A549 (cell line): ENCODE measurements at regions of chr5 and their contacts with region 1.

Region 1: DNA sequence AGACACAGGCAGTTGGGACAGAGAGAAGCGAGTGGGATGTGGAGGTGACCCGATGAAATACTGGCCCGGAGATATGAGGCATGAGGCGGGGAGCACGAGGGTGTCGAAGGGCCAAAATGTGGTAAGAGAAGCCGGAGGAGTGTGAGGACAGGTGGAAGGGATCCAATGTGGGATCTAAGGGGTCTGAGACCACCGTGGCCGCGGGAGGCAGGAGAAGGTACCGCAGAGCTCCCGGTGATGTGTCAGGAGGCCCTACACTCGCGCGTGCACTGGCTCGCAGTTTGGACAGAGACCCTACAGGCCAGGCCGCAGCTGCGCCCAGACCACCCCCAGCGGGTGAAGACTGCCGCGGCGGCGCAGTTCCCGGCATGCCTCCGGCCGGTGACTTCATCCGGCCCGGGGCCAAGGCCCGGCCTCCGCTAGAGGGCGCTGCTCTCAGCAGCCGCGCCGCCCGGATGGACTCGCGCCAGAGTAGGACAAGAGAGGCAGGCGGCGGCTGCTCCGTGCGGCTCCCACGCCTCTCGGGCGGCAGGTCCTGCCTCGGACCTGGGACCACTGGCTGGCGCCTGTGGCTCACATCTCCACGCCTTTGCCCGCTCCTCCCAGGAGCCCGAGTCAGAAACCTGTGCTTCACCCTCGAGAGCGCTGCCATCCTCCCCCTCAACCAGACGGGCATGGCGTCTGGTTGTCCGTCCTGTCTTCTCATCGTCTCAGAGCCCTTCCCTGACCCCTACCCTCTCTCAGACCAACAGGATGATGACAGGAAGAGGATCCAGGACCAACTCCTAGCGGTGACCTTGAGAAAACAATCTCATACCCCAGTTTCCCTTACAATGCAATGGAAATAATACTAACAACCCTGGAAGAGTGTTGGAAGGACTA is 35.4 kb upstream of the STING1 start:
- DNase-seq: peak; percentile 89 to 94
- ATAC-seq: peak; percentile 86 to 91
- H3K4me3 ChIP-seq: peak overlapping the region; percentile 50
- H3K27ac ChIP-seq: peak overlapping the region; percentile 91 to 92
- H3K4me1 ChIP-seq: 0 out of 3 replicates have a peak, but pooled peaks cover 3% of the 10 kb centered on the region
- CTCF ChIP-seq: peak; percentile 98
- EP300 ChIP-seq: no peak; a peak in 1 of 5 replicates
- POLR2A ChIP-seq: peak; percentile 84
- RAD21 ChIP-seq: peak; percentile 48 to 63

Region 2: DNA sequence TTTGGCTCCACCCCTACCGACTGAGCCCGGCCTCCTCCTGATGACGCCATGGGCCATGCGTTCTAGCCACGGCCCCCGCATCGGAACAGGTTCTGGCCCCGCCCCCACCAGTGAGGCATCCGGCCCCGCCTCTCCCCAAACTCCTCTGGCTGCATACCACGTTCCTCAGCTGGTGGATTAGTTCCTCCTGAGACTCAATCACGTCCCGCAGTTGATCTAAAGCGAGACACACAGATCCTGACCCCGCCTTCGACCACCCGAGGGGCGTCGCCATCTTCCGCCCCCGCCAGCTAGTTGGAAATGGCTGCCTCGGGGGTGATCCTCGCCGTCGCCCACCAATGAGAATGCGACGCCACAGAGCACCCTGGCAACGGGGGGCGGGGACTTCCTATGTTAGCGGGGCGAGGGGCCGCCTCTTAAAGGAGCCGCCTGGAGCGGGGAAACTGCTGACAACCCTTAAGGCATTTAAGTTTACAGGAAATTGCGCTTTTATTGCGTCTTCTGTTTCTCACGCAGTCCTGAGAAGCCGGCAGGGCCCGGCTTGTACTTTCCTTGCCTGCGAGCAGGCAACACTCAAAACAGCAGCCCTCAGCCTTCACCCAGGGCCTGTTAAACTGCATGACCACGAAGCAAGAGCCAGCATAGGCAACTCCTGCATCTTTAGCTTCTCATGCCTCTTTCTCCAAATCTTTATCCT is 114.0 kb before region 1 on chr5 and contains the start of gene SPATA24:
- CTCF ChIA-PET with region 1: interaction called, 12 read pairs
- POLR2A ChIA-PET with region 1: no interaction called
- DNase-seq: peak; percentile 96 to 97
- ATAC-seq: peak; percentile 89 to 95
- H3K4me3 ChIP-seq: peak within 1 kb of the TSS; percentile 45
- H3K27ac ChIP-seq: peak within 1 kb of the TSS; percentile 86 to 91
- H3K4me1 ChIP-seq: peaks cover 12% of the 10 kb centered on the region
- CTCF ChIP-seq: no peak
- EP300 ChIP-seq: no peak
- POLR2A ChIP-seq: peak; percentile 36
- RAD21 ChIP-seq: no peak
- polyA plus RNA-seq, gene SPATA24: 4.5 and 5.7 TPM in 2 replicates

Region 3: DNA sequence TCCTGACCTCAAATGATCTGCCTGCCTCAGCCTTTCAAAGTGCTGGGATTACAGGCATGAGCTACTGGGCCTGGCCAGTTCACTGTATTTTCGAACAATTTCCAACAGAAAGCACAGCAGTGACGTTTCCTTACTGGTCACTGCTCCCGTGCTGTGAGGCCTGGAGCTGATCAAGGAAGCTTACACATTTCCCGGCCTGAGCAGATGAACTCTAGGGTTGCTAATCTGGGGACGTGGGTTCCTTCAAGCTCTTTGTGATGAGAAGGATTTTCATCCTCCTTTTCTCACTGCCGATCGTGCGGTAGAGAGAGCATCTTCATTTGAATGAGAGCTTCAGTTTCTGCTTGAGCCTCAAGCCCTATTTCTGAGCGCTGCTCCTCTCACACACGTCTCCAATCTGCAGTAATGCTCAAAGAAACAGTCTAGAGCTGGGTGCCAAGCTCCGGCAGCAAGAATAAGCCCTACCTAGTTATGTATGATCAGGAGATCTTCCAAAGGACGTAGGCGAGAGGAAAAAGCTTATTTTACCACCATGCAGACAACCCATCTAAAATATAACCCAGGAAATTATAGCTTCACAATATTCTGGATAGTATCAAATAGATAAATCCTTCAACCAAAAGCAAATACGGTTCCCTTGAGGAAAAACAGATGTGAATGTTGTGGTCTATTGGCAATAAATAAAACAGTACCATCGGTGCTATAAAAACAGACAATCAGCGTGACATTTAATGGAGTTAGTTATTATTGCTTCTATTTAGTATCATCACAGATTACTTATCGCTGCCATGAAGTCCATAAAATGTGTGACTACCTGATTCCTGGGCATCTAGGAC is 106.7 kb before region 1 on chr5:
- CTCF ChIA-PET with region 1: interaction called, 392 read pairs
- POLR2A ChIA-PET with region 1: no interaction called
- DNase-seq: no peak
- ATAC-seq: no peak
- H3K4me3 ChIP-seq: no peak overlapping the region
- H3K27ac ChIP-seq: no peak overlapping the region
- H3K4me1 ChIP-seq: no peaks in the 10 kb centered on the region
- CTCF ChIP-seq: no peak
- EP300 ChIP-seq: no peak
- POLR2A ChIP-seq: no peak
- RAD21 ChIP-seq: no peak

Region 4: GRCh38 chr5:139439013-139439903 is 78.7 kb before region 1 on chr5 and contains the start of gene DNAJC18:
- CTCF ChIA-PET with region 1: interaction called, 26 read pairs
- POLR2A ChIA-PET with region 1: no interaction called
- DNase-seq: peak; percentile 85 to 95
- ATAC-seq: peak; percentile 98 to 99
- H3K4me3 ChIP-seq: peak within 1 kb of the TSS; percentile 73
- H3K27ac ChIP-seq: peak within 1 kb of the TSS; percentile 81 to 90
- H3K4me1 ChIP-seq: peaks cover 8% of the 10 kb centered on the region; the same call in 1 of the 3 replicates
- CTCF ChIP-seq: no peak
- EP300 ChIP-seq: no peak
- POLR2A ChIP-seq: peak; percentile 38
- RAD21 ChIP-seq: no peak
- polyA plus RNA-seq, gene DNAJC18: 5.3 TPM in 2 replicates

Region 5: GRCh38 chr5:139492700-139493192 is 25.2 kb before region 1 on chr5:
- CTCF ChIA-PET with region 1: interaction called, 26 read pairs
- POLR2A ChIA-PET with region 1: no interaction called
- DNase-seq: peak in 1 of 2 experiments; percentile 29
- ATAC-seq: peak in 1 of 2 experiments; percentile 62; a peak in 3 of 6 replicates
- H3K4me3 ChIP-seq: no peak overlapping the region
- H3K27ac ChIP-seq: no peak overlapping the region
- H3K4me1 ChIP-seq: peaks cover 16% of the 10 kb centered on the region
- CTCF ChIP-seq: no peak
- EP300 ChIP-seq: no peak
- POLR2A ChIP-seq: no peak
- RAD21 ChIP-seq: no peak

Region 6: GRCh38 chr5:139501381-139501780 is 16.5 kb before region 1 on chr5:
- CTCF ChIA-PET with region 1: interaction called, 26 read pairs
- POLR2A ChIA-PET with region 1: interaction called, 6 read pairs
- DNase-seq: no peak
- ATAC-seq: no peak
- H3K4me3 ChIP-seq: no peak overlapping the region
- H3K27ac ChIP-seq: no peak overlapping the region
- H3K4me1 ChIP-seq: peaks cover 1% of the 10 kb centered on the region; the same call in 2 of the 3 replicates
- CTCF ChIP-seq: no peak
- EP300 ChIP-seq: no peak
- POLR2A ChIP-seq: no peak
- RAD21 ChIP-seq: no peak

Region 7: DNA sequence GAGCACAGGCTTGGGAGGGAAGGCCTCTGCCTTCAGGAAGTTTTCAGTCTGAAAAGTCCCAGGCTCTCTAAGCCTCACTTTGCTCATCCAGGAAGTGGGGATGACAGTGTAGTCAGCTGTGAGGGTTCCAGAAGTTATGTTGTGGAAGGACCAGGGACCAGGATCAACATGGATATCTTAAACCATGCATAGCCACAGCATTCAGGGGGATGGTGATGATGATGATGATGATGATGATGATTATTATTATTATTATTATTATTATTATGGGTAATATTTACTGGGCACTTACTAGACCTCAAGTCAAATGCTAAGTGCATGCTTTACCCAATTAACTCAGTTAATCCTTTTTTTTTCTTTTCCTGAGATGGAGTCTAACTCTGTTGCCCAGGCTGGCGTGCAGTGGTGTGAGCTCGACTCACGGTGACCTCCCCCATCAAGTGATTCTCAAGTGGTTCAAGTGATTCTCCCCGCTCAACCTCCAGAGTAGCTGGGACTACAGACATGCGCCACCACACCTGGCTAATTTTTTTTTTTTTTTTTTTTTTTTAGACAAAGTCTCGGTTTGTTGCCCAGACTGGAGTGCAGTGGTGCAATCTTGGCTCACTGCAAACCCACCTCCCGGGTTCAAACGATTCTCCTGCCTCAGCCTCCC is 199.2 kb after region 1 on chr5:
- CTCF ChIA-PET with region 1: no interaction called
- POLR2A ChIA-PET with region 1: no interaction called
- DNase-seq: no peak
- ATAC-seq: no peak
- H3K4me3 ChIP-seq: no peak overlapping the region
- H3K27ac ChIP-seq: no peak overlapping the region
- H3K4me1 ChIP-seq: no peaks in the 10 kb centered on the region
- CTCF ChIP-seq: no peak
- EP300 ChIP-seq: no peak
- POLR2A ChIP-seq: no peak
- RAD21 ChIP-seq: no peak